Common myeloid progenitor, CD34-positive (primary cell): ENCODE measurements at regions of chr19 and their contacts with region 1.

Region 1: GRCh38 chr19:17470068-17470841 is at the start of gene SLC27A1:
- DNase-seq: peak; percentile 98 to 99 (median 99)
- H3K4me3 ChIP-seq: peak within 1 kb of the TSS; percentile 67 to 86 (median 77)
- H3K27ac ChIP-seq: peak within 1 kb of the TSS in 1 of 2 experiments; percentile 68
- H3K4me1 ChIP-seq: peaks cover 0 to 51% (median 33%) of the 10 kb centered on the region in 4 experiments
- H3K27me3 ChIP-seq: no peaks in the 10 kb centered on the region

Region 2: GRCh38 chr19:17411801-17412200 is 58.5 kb before region 1 on chr19:
- CTCF ChIA-PET with region 1: no interaction called
- POLR2A ChIA-PET with region 1: no interaction called
- DNase-seq: no peak
- H3K4me3 ChIP-seq: no peak overlapping the region
- H3K27ac ChIP-seq: peak overlapping the region in 1 of 2 experiments; percentile 50
- H3K4me1 ChIP-seq: peaks cover 4 to 31% (median 24%) of the 10 kb centered on the region in 4 experiments
- H3K27me3 ChIP-seq: no peaks in the 10 kb centered on the region

Region 3: DNA sequence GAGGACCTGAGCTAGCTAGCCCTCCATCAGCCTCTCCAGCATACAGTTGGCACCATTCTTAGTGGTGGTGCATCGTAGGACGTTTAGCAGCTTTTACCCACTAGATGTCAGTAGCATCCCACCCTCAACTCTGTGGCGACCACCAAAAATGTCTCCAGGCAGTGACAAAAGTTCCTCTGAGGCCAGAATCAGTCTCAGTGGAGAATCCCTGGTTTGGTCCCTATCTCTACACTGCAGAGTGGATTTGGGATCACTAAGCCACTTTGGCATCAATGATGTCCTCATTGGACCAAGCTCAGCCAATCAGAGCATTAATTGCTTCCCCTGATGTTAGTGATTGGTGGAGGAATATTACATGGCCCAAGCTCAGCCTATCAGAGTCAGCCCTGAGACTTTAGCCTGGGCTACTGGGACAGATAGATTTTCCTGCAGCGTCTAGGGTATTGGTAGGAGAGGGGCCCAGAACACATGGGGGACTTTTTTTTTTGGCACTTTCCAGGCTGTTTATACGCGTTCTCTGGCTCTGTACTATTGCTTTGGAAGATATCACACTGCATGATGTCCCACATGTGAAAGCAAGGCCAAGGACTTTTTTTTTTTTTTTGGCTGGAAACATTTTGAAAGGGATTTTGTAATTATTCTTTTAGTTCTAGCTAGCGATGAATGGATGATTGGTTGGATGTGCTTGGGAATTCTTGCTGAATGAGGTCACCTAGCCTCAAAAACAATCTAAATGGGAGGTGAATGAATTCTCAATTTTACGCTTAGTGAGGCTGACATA is 28.8 kb before region 1 on chr19:
- CTCF ChIA-PET with region 1: interaction called, 13 read pairs
- POLR2A ChIA-PET with region 1: no interaction called
- DNase-seq: peak; percentile 58 to 80 (median 73)
- H3K4me3 ChIP-seq: no peak overlapping the region
- H3K27ac ChIP-seq: no peak overlapping the region
- H3K4me1 ChIP-seq: no peaks in the 10 kb centered on the region
- H3K27me3 ChIP-seq: no peaks in the 10 kb centered on the region